ENCODE measurements at regions of chr13 and their contacts with region 1.

Region 1: DNA sequence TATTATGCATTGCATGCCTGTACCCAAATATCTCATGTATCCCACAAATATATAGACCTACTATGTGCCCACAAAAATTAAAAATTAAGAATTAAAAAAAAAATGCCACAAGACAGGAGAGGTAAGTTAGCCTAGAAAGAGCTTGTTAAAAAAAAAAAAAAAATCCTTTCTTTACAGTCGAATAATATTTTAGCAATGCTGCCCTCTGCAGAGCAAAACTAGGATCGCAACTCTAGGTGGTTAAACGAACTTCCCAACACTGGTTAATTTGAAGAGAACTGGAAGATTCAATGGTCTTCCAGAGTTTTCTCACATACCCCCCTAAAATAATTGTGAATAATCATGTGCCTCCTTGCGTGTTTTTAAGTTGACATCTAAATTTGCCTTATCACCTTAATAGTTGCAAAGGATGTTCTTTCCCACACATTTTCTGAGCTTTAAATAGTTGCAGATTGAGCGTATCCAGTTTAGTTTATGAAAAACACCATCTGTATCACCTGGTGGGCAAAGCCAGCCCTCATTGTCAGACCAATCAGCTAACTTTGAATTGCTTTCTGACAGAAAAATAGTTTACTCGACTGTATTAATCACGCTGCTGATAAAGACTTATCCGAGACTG is 47.4 kb upstream of the RCBTB2 start:
- DNase-seq: no peak
- H3K4me3 ChIP-seq: no peak overlapping the region
- CTCF ChIP-seq: peak; percentile 36

Region 2: GRCh38 chr13:48126944-48127830 is 453.1 kb before region 1 on chr13:
- CTCF ChIA-PET with region 1: interaction called, 53 read pairs
- POLR2A ChIA-PET with region 1: no interaction called
- DNase-seq: peak; percentile 14
- H3K4me3 ChIP-seq: no peak overlapping the region
- CTCF ChIP-seq: peak; percentile 45

Region 3: GRCh38 chr13:48320891-48321510 is 259.3 kb before region 1 on chr13:
- CTCF ChIA-PET with region 1: interaction called, 12 read pairs
- POLR2A ChIA-PET with region 1: no interaction called
- DNase-seq: no peak
- H3K4me3 ChIP-seq: no peak overlapping the region
- CTCF ChIP-seq: no peak

Region 4: DNA sequence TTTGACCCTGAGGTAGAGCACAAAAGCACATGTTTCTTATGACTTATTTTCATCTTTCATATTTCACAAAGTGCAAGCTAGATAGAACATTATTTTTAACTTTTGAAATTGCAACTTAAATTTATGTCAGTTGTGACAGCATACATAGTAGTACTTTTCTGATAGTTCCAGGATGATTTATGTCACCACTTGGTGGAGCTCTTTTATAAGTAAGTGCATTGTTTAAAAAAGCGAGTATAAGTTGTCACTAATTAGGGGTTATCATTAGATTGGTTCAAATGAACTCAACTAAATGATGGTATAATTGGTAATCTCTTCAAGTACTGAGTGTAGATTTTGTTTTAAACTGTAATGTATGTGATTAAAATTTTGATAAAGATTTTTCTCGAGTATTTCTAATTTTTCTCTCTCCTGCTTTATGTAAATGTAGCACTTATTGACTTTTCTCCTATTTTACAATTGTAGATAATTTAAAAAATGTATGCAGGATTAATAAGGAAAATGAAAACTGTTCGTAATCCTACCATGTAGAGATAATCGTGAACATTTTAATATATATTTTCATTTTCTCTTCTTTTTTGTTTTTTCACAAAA is 245.7 kb before region 1 on chr13:
- CTCF ChIA-PET with region 1: interaction called, 214 read pairs
- POLR2A ChIA-PET with region 1: no interaction called
- DNase-seq: no peak
- H3K4me3 ChIP-seq: no peak overlapping the region
- CTCF ChIP-seq: peak; percentile 6

Region 5: GRCh38 chr13:48562296-48563066 is 17.8 kb before region 1 on chr13:
- CTCF ChIA-PET with region 1: interaction called, 30 read pairs
- POLR2A ChIA-PET with region 1: interaction called, 3 read pairs
- DNase-seq: no peak
- H3K4me3 ChIP-seq: no peak overlapping the region
- CTCF ChIP-seq: no peak

Region 6: DNA sequence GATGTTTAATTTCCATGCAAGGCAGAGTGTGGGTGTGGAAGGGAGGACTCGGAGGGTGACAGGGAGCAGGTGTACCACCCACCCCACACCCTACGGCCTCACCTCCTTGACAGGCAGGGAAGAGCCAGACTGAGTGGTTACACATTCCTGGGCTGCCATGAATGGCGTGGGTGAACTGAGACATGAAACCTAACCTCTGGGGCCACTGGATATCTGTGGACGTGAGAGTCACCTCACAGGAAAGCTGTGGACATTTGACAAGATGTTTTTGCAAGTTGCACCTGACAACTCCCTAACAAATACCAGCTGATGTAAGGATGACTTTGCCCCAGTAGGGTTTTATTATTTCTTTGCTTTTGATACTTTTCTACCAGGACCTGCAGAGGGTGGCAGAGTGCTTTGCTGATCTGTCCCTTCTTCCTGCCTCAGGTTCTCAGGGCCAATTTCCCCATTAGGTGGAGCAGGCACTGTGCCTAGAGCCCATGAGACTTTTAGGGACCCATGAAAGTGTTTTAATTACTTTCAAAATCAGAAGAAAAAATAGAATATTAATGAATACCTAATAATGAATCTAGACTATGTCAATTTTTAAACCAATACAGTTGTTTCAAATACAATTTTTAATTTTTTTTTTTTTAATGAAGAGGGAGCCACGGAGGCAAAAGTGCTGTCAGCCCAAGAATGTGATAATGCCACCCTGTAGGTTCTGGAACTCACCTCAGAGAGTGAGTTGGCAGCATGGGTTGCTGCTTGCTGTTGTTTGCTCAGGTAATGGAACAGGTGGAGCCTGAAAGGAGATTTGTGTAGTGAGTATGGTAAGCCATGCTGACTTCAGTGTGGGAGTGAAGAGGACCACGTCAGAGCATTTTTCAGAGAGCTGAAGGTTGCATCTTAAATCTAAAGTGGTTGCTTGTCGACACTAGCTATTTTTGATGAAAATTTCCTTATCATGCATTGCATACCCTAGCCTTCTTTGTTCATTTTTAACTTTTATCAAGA is 15.4 kb after region 1 on chr13:
- CTCF ChIA-PET with region 1: interaction called, 37 read pairs
- POLR2A ChIA-PET with region 1: interaction called, 3 read pairs
- DNase-seq: no peak
- H3K4me3 ChIP-seq: no peak overlapping the region
- CTCF ChIP-seq: peak; percentile 43